ENCODE measurements at regions of chr14 and their contacts with region 1.

Region 1: DNA sequence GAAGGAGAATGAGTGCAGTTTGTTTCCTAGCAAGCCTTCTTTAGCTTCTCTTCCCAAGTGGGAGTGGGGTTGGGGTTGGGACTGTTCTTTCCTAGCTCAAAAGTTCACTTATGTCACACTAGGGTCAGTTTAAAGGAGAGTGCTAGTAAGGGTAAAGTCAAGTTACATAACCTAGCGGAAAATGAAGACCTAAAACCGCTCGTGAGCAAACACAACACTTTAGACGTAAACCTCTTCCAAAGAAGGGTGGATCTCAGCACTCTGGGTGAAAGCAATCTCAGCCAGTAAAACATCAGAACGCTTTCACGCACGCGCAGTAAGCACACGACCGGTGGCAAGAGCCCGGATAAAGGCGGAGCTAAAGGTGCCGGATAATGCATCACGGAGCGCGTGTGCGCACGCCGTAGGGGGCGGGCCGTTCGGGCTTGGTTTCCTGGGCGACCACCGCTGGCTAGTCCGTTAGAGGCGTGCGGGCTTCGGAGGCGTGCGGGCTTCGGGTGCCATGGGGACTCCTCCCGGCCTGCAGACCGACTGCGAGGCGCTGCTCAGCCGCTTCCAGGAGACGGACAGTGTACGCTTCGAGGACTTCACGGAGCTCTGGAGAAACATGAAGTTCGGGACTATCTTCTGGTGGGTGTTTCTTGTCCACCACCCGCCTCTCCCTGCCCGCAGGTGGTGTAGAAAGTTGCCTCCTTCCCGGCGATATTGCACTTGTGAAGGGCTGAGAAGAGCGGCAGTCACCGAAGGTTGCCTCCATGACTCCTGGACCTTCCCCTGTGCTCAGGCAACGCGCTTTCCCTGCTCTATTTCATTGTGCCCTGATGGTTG is at the start of gene SNAPC1:
- DNase-seq: peak; percentile 97
- ATAC-seq: peak; percentile 98
- H3K4me3 ChIP-seq: peak within 1 kb of the TSS; percentile 92 to 99 (median 92)
- H3K27ac ChIP-seq: peak within 1 kb of the TSS; percentile 75
- H3K4me1 ChIP-seq: peaks cover 39% of the 10 kb centered on the region
- H3K27me3 ChIP-seq: no peaks in the 10 kb centered on the region; a peak in 1 of 5 replicates
- CTCF ChIP-seq: no peak
- EP300 ChIP-seq: no peak
- POLR2A ChIP-seq: peak in 1 of 2 experiments; percentile 90; a peak in 2 of 4 replicates
- RAD21 ChIP-seq: no peak
- total RNA-seq, gene SNAPC1: 8.4 and 8.5 TPM in 2 replicates

Region 2: DNA sequence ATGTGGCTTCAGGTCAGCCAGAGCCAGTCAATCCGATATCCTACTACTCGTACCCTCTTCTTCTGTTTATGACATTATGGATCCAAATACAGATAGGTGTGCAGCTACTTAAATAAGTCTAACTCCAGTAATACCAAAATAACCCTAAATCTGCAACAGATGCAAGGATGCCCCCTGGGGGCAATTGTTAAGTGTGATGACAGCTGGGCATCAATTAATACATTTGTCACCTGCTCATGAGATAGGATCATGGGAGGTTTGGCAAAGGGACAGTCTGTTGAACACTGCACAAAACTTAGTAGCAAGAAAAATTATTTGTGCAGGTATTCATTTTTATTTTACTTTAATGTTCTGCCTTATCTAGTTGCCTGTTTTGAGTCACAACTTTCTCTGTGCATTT is 698.0 kb before region 1 on chr14:
- CTCF ChIA-PET with region 1: no interaction called
- POLR2A ChIA-PET with region 1: no interaction called
- in situ Hi-C with region 1: no loop called
- intact Hi-C with region 1: no loop called
- DNase-seq: no peak
- ATAC-seq: no peak
- H3K4me3 ChIP-seq: no peak overlapping the region
- H3K27ac ChIP-seq: no peak overlapping the region
- H3K4me1 ChIP-seq: no peaks in the 10 kb centered on the region
- H3K27me3 ChIP-seq: no peaks in the 10 kb centered on the region
- CTCF ChIP-seq: no peak
- EP300 ChIP-seq: no peak
- POLR2A ChIP-seq: no peak
- RAD21 ChIP-seq: no peak

Region 3: GRCh38 chr14:61737915-61738314 is 24.3 kb before region 1 on chr14:
- CTCF ChIA-PET with region 1: no interaction called
- POLR2A ChIA-PET with region 1: interaction called, 5 read pairs
- in situ Hi-C with region 1: no loop called
- intact Hi-C with region 1: loop called (anchors 1 kb)
- DNase-seq: no peak
- ATAC-seq: no peak
- H3K4me3 ChIP-seq: no peak overlapping the region
- H3K27ac ChIP-seq: no peak overlapping the region
- H3K4me1 ChIP-seq: no peaks in the 10 kb centered on the region
- H3K27me3 ChIP-seq: no peaks in the 10 kb centered on the region
- CTCF ChIP-seq: no peak
- EP300 ChIP-seq: no peak
- POLR2A ChIP-seq: no peak
- RAD21 ChIP-seq: no peak

Region 4: GRCh38 chr14:61750708-61751474 is 11.3 kb before region 1 on chr14:
- CTCF ChIA-PET with region 1: no interaction called
- POLR2A ChIA-PET with region 1: interaction called, 36 read pairs
- in situ Hi-C with region 1: no loop called
- intact Hi-C with region 1: no loop called
- DNase-seq: no peak
- ATAC-seq: no peak
- H3K4me3 ChIP-seq: no peak overlapping the region
- H3K27ac ChIP-seq: no peak overlapping the region
- H3K4me1 ChIP-seq: peaks cover 26% of the 10 kb centered on the region
- H3K27me3 ChIP-seq: no peaks in the 10 kb centered on the region
- CTCF ChIP-seq: no peak
- EP300 ChIP-seq: no peak
- POLR2A ChIP-seq: no peak
- RAD21 ChIP-seq: no peak

Region 5: DNA sequence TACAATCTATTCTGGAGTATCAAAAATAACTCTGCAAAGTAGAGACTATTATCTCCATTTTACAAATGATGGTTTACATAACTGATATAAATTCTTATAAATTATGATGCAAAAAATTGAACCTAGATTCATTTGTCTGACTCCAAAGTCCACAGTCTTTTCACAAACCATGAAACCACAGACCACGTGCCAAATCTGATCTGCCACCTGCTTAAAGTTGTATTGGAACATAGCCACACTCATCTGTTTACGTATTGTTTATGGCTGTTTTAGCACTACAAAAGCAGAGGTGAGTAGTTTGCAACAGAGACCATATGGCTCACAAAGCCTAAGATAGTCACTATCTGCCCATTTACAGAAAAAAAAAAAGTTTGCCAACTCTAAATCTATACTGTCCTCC is 1177.8 kb after region 1 on chr14:
- CTCF ChIA-PET with region 1: no interaction called
- POLR2A ChIA-PET with region 1: no interaction called
- in situ Hi-C with region 1: no loop called
- intact Hi-C with region 1: no loop called
- DNase-seq: no peak
- ATAC-seq: no peak
- H3K4me3 ChIP-seq: no peak overlapping the region
- H3K27ac ChIP-seq: no peak overlapping the region
- H3K4me1 ChIP-seq: no peaks in the 10 kb centered on the region
- H3K27me3 ChIP-seq: no peaks in the 10 kb centered on the region; a peak in 1 of 5 replicates
- CTCF ChIP-seq: no peak
- EP300 ChIP-seq: no peak
- POLR2A ChIP-seq: no peak
- RAD21 ChIP-seq: no peak